ENCODE measurements at regions of chr13 and their contacts with region 1.

Region 1: GRCh38 chr13:85828149-85828548 is 28.9 kb upstream of the SLITRK6 start:
- DNase-seq: no peak
- ATAC-seq: no peak
- H3K4me3 Mint-ChIP-seq: no peak overlapping the region
- H3K27ac Mint-ChIP-seq: no peak overlapping the region
- H3K4me1 Mint-ChIP-seq: no peaks in the 10 kb centered on the region
- H3K27me3 Mint-ChIP-seq: no peaks in the 10 kb centered on the region
- CTCF ChIP-seq: peak; percentile 29

Region 2: GRCh38 chr13:84896128-84896527 is 932.0 kb before region 1 on chr13:
- CTCF ChIA-PET with region 1: no interaction called
- POLR2A ChIA-PET with region 1: no interaction called
- intact Hi-C with region 1: loop called (anchors 1 kb)
- DNase-seq: no peak
- ATAC-seq: no peak
- H3K4me3 Mint-ChIP-seq: no peak overlapping the region
- H3K27ac Mint-ChIP-seq: no peak overlapping the region
- H3K4me1 Mint-ChIP-seq: no peaks in the 10 kb centered on the region
- H3K27me3 Mint-ChIP-seq: no peaks in the 10 kb centered on the region
- CTCF ChIP-seq: no peak

Region 3: DNA sequence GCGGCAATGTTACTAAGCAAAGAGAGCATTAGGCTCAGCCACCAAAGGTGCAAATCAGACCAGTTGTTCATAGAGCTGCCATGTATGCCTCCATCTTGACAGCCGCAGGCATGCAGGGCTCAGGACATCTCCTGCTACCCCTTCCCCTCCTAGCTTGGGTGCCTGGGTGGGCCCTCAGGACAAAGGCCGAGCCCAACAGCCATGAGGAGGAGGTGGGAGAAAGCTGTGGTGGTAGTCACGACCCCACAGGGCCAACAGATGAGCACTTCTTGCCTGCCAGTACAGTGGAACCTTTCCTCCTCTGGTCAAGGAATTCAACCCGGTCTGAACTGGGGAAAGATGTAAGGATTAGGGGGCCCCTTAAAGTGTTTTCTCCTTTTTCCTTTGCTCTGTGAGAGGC is 357.5 kb after region 1 on chr13:
- CTCF ChIA-PET with region 1: no interaction called
- POLR2A ChIA-PET with region 1: no interaction called
- intact Hi-C with region 1: no loop called
- DNase-seq: no peak
- ATAC-seq: no peak
- H3K4me3 Mint-ChIP-seq: no peak overlapping the region
- H3K27ac Mint-ChIP-seq: no peak overlapping the region
- H3K4me1 Mint-ChIP-seq: no peaks in the 10 kb centered on the region
- H3K27me3 Mint-ChIP-seq: no peaks in the 10 kb centered on the region
- CTCF ChIP-seq: no peak

Region 4: DNA sequence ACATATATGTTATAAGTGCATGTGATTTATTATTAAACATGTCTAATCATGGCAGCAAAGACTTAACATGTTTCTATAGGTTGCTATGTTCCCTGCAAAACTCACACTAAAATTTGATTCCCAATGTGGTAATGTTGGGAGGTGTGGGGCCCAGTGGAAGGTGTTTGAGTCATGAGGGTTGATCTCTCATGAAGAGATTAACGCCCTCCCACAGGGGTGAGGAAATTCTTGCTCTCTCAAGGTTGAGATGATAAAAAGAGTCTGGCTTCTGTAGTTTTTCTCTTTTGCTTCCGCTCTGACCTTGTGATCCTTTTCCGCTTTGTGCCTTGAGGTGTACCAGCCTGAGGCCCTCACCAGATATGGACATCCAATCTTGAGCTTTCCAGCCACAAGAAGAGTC is 1105.5 kb after region 1 on chr13:
- CTCF ChIA-PET with region 1: no interaction called
- POLR2A ChIA-PET with region 1: no interaction called
- intact Hi-C with region 1: no loop called
- DNase-seq: no peak
- ATAC-seq: no peak
- H3K4me3 Mint-ChIP-seq: no peak overlapping the region
- H3K27ac Mint-ChIP-seq: no peak overlapping the region
- H3K4me1 Mint-ChIP-seq: no peaks in the 10 kb centered on the region
- H3K27me3 Mint-ChIP-seq: no peaks in the 10 kb centered on the region
- CTCF ChIP-seq: no peak

Measured in activated B cell treated with CpG ODN at 0.5 μM for 24 hours (primary cell).